Mammary epithelial cell (primary cell): ENCODE measurements at regions of chr6 and their contacts with region 1.

Region 1: GRCh38 chr6:44151348-44152108 is 7.1 kb upstream of the CAPN11 start:
- DNase-seq: peak; percentile 48
- H3K4me3 ChIP-seq: no peak overlapping the region
- H3K27ac ChIP-seq: no peak overlapping the region
- H3K4me1 ChIP-seq: no peaks in the 10 kb centered on the region
- H3K27me3 ChIP-seq: no peaks in the 10 kb centered on the region
- CTCF ChIP-seq: peak; percentile 94 to 99

Region 2: GRCh38 chr6:44127186-44128019 is 24.1 kb before region 1 on chr6 and contains the starts of genes MRPL14 and TMEM63B:
- CTCF ChIA-PET with region 1: no interaction called
- dilution Hi-C with region 1: no loop called
- in situ Hi-C with region 1: no loop called
- intact Hi-C with region 1: loop called (anchors 2 kb)
- DNase-seq: peak; percentile 84
- H3K4me3 ChIP-seq: peak within 1 kb of the TSS; percentile 81 to 89 (median 88)
- H3K27ac ChIP-seq: peak within 1 kb of the TSS; percentile 63
- H3K4me1 ChIP-seq: peaks cover 37% of the 10 kb centered on the region
- H3K27me3 ChIP-seq: no peaks in the 10 kb centered on the region
- CTCF ChIP-seq: no peak
- total RNA-seq, gene MRPL14: 57.2 to 82.0 TPM
- total RNA-seq, gene TMEM63B: 121 to 182 TPM